Activated B cell treated with CpG ODN at 0.5 μM for 24 hours (primary cell): ENCODE measurements at regions of chr9 and their contacts with region 1.

Region 1: DNA sequence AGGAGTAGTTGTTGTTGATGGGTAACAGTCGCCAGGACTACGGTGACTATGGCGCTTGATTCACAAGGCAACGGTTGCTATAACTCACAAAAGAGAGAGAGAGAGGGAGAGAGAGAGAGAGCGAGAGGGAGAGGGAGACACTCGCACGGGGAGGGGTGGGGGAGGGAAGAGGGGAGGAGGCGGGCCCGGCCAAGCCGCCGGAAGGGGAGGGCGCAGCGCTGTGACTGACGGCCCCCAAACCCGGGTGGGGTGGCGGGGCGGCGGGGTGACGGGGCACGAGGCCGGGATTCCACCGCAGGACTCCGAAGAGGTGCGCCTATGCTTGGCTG is at the start of gene RFX3:
- DNase-seq: no peak
- ATAC-seq: peak; percentile 61
- H3K4me3 Mint-ChIP-seq: peak within 1 kb of the TSS; percentile 97
- H3K27ac Mint-ChIP-seq: peak within 1 kb of the TSS; percentile 100
- H3K4me1 Mint-ChIP-seq: peaks cover 60% of the 10 kb centered on the region
- H3K27me3 Mint-ChIP-seq: no peaks in the 10 kb centered on the region
- CTCF ChIP-seq: no peak
- total RNA-seq, gene RFX3: 34.6 and 39.1 TPM in 2 replicates

Region 2: GRCh38 chr9:3299872-3300271 is 225.9 kb before region 1 on chr9:
- CTCF ChIA-PET with region 1: no interaction called
- POLR2A ChIA-PET with region 1: interaction called, 11 read pairs
- intact Hi-C with region 1: loop called (anchors 5 kb)
- DNase-seq: no peak
- ATAC-seq: peak; percentile 93
- H3K4me3 Mint-ChIP-seq: no peak overlapping the region
- H3K27ac Mint-ChIP-seq: peak overlapping the region; percentile 51
- H3K4me1 Mint-ChIP-seq: peaks cover 22% of the 10 kb centered on the region
- H3K27me3 Mint-ChIP-seq: no peaks in the 10 kb centered on the region
- CTCF ChIP-seq: no peak

Region 3: DNA sequence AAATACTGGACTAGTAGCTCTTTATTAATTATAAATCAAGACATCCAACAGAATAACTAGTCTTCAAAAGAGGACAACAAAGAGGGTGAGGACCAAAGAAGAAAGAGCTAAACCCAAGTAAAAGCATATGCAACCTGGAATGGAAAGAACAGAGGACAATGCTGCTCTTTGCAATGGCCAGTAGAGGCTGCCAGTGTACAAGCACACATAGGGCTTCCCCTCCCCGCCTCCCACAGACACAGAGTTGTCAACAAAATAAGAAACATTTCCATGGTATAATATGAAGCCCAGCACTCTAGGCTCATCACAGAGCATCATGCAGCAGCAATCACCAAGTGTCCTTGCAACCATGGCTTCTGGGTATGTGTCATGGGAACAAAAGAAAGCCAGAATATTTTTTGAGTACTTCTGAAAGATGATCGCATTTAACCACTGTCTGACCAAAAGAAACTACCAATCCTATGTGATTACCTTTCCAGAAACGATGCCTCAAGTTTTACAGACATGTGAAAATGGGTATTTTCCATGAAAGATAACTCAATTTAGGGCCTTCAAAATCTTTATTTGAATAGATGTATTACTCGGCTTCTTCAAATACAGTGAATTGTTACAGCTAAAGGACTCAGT is 58.1 kb before region 1 on chr9:
- CTCF ChIA-PET with region 1: interaction called, 7 read pairs
- POLR2A ChIA-PET with region 1: interaction called, 309 read pairs
- intact Hi-C with region 1: no loop called
- DNase-seq: no peak
- ATAC-seq: peak; percentile 100
- H3K4me3 Mint-ChIP-seq: no peak overlapping the region
- H3K27ac Mint-ChIP-seq: no peak overlapping the region
- H3K4me1 Mint-ChIP-seq: peaks cover 15% of the 10 kb centered on the region
- H3K27me3 Mint-ChIP-seq: no peaks in the 10 kb centered on the region
- CTCF ChIP-seq: peak; percentile 78

Region 4: DNA sequence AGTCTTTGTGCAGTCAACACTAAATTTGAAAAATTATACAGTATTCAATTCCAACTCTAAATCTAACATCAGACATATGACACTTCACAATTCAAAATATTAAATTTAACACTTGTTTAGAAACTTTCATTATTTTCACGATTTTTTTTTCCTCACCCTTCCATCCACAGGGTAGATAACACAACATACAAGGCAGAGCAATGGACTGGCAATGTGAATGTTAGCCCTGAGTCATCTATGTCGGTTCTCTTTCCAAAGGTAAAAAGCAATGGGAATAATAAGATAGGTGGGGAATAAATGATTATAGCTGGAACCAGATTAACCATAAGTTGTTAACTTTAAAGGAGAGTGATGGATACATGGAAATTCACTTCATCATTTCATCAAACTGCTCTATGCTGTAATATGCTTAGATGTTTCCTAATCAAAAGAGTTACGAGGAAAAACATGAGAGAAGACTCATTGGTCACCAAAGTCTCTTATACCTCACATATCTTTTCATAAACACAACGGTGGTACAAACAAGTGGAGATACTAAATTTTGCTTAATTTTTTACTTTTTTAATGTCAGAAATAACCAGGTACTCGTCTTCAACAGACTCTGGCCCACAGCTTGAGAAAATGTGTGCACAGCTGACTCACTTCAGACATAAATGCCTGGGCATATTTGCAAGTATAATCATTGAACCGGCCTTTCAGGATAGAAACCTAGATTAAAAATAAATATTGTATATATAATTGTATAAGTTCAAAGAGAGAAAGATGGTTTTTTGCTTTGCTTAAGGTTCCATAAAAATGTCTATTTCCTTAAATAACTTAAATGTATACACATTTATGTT is 23.0 kb before region 1 on chr9:
- CTCF ChIA-PET with region 1: interaction called, 3 read pairs
- POLR2A ChIA-PET with region 1: interaction called, 162 read pairs
- intact Hi-C with region 1: no loop called
- DNase-seq: no peak
- ATAC-seq: peak; percentile 32
- H3K4me3 Mint-ChIP-seq: no peak overlapping the region
- H3K27ac Mint-ChIP-seq: no peak overlapping the region
- H3K4me1 Mint-ChIP-seq: peaks cover 30% of the 10 kb centered on the region
- H3K27me3 Mint-ChIP-seq: no peaks in the 10 kb centered on the region
- CTCF ChIP-seq: no peak

Region 5: DNA sequence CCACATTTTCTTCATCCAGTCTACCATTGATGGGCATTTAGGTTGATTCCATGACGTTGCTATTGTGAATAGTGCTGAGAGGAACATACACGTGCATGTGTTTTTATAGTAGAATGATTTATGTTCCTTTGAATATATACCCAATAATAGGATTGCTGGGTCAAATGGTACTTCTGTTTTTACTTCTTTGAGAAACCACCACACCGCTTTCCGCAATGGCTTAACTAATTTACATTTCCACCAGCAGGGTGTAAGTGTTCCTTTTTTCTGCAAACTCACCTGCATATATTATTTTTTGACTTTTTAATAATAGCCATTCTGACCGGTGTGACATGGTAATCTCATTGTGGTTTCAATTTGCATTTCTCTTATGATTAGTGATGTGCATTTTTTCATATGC is 82.2 kb after region 1 on chr9:
- CTCF ChIA-PET with region 1: no interaction called
- POLR2A ChIA-PET with region 1: interaction called, 3 read pairs
- intact Hi-C with region 1: loop called (anchors 5 kb)
- DNase-seq: no peak
- ATAC-seq: peak; percentile 50
- H3K4me3 Mint-ChIP-seq: no peak overlapping the region
- H3K27ac Mint-ChIP-seq: no peak overlapping the region
- H3K4me1 Mint-ChIP-seq: peaks cover 11% of the 10 kb centered on the region
- H3K27me3 Mint-ChIP-seq: no peaks in the 10 kb centered on the region
- CTCF ChIP-seq: no peak

Region 6: GRCh38 chr9:4792572-4793458 is 1267.0 kb after region 1 on chr9 and contains the start of gene RCL1:
- CTCF ChIA-PET with region 1: no interaction called
- POLR2A ChIA-PET with region 1: interaction called, 8 read pairs
- intact Hi-C with region 1: loop called (anchors 10 kb)
- DNase-seq: peak; percentile 97
- ATAC-seq: peak; percentile 93
- H3K4me3 Mint-ChIP-seq: peak within 1 kb of the TSS; percentile 97
- H3K27ac Mint-ChIP-seq: peak within 1 kb of the TSS; percentile 96
- H3K4me1 Mint-ChIP-seq: peaks cover 40% of the 10 kb centered on the region
- H3K27me3 Mint-ChIP-seq: peaks cover 2% of the 10 kb centered on the region
- CTCF ChIP-seq: no peak
- total RNA-seq, gene RCL1: 23.9 and 26.0 TPM in 2 replicates